Mammary epithelial cell (primary cell): ENCODE measurements at regions of chr4 and their contacts with region 1.

Region 1: GRCh38 chr4:42268824-42269223 is 116.4 kb upstream of the BEND4 start:
- DNase-seq: no peak
- H3K4me3 ChIP-seq: no peak overlapping the region
- H3K27ac ChIP-seq: no peak overlapping the region
- H3K4me1 ChIP-seq: no peaks in the 10 kb centered on the region
- H3K27me3 ChIP-seq: no peaks in the 10 kb centered on the region
- CTCF ChIP-seq: no peak

Region 2: DNA sequence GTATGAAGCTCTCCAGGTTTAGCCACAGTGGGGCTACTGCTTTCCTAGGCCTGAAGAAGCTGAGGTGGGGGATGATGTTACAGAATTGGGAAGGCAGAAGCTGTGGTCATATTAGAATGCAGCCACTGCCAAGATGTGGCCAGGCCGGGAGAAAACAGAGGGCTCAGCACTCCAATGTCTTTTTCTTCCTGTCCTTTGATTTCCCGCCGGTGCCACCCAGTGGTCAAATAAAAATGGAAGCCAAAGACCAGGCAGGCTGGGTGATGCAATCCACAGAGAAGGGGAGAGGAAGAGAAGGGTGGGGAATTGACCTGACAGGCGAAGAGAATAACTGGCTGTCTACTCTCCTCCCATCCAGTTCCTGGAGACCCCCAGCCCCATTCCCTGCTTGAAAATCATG is 33.5 kb after region 1 on chr4:
- CTCF ChIA-PET with region 1: no interaction called
- dilution Hi-C with region 1: no loop called
- in situ Hi-C with region 1: no loop called
- intact Hi-C with region 1: no loop called
- DNase-seq: no peak
- H3K4me3 ChIP-seq: no peak overlapping the region
- H3K27ac ChIP-seq: no peak overlapping the region
- H3K4me1 ChIP-seq: no peaks in the 10 kb centered on the region
- H3K27me3 ChIP-seq: no peaks in the 10 kb centered on the region
- CTCF ChIP-seq: no peak

Region 3: GRCh38 chr4:42327323-42327722 is 58.5 kb after region 1 on chr4:
- CTCF ChIA-PET with region 1: no interaction called
- dilution Hi-C with region 1: loop called (anchors 5 kb)
- in situ Hi-C with region 1: no loop called
- intact Hi-C with region 1: no loop called
- DNase-seq: no peak
- H3K4me3 ChIP-seq: no peak overlapping the region
- H3K27ac ChIP-seq: no peak overlapping the region
- H3K4me1 ChIP-seq: no peaks in the 10 kb centered on the region
- H3K27me3 ChIP-seq: no peaks in the 10 kb centered on the region
- CTCF ChIP-seq: no peak

Region 4: DNA sequence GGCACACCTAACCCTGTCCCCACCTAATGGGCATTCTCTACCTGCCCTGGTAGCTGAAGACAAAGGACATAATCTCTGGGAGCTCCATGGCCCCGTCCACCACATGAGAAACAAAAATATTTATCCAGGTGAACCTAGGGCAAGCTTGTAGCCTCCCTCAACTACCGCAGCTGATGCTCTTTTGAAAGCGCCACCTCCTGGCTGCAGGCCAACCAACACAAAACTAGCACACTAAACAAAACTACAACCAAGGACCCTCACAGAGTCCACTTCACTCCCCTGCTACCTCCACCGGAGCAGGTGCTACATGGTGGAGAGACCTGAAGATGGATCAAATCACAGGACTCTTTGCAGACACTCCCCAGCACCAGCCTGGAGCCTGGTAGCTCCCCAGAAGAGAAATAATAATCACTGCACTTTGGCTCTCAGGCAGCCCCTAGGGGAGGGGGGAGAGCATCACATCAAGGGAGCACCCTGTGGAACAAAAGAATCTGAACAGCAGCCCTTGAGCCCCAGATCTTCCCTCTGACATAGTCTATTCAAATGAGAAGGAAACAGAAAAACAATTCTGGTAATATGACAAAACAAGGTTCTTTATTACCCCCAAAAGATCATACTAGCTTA is 499.4 kb after region 1 on chr4:
- CTCF ChIA-PET with region 1: no interaction called
- dilution Hi-C with region 1: no loop called
- in situ Hi-C with region 1: no loop called
- intact Hi-C with region 1: no loop called
- DNase-seq: no peak
- H3K4me3 ChIP-seq: no peak overlapping the region
- H3K27ac ChIP-seq: no peak overlapping the region
- H3K4me1 ChIP-seq: no peaks in the 10 kb centered on the region
- H3K27me3 ChIP-seq: no peaks in the 10 kb centered on the region
- CTCF ChIP-seq: no peak